Activated naive CD4-positive, alpha-beta T cell treated with anti-CD3 and anti-CD28 coated beads, Interleukin-2, amount 10 ng/mL, durations not matched to agents 7 days and 5 days (primary cell): ENCODE measurements at regions of chr1 and their contacts with region 1.

Region 1: GRCh38 chr1:181397845-181398244 is 85.5 kb upstream of the CACNA1E start:
- DNase-seq: peak; percentile 58
- H3K4me3 Mint-ChIP-seq: peak overlapping the region; percentile 48
- H3K27ac Mint-ChIP-seq: no peak overlapping the region
- H3K4me1 Mint-ChIP-seq: peaks cover 41% of the 10 kb centered on the region
- H3K27me3 Mint-ChIP-seq: no peaks in the 10 kb centered on the region

Region 2: GRCh38 chr1:181424786-181425403 is 27.1 kb after region 1 on chr1:
- CTCF ChIA-PET with region 1: interaction called, 32 read pairs
- DNase-seq: peak; percentile 87
- H3K4me3 Mint-ChIP-seq: peak overlapping the region; percentile 35
- H3K27ac Mint-ChIP-seq: no peak overlapping the region
- H3K4me1 Mint-ChIP-seq: peaks cover 10% of the 10 kb centered on the region
- H3K27me3 Mint-ChIP-seq: peaks cover 42% of the 10 kb centered on the region